GM12878 (cell line): ENCODE measurements at regions of chr10 and their contacts with region 1.

Region 1: DNA sequence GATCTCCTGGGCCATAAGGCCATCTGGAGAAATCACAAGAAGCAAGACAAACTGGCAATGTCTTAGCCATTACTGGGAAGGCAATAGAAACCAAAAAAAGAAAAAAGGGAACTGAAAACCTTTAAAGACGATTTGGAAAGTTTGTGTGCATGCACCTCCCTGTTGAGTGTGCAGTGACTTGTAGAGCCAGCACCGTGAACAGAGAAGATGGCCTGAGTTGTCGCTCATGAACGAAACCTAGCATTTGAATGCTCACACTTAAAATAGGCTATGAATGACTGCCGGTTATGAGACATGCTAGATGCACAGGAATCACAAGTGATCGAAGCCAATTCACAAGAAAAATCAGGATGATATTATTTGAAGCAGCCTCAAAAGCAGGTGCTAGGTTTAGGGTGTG is 151.3 kb upstream of the ADO start:
- DNase-seq: peak; percentile 97
- ATAC-seq: peak; percentile 85
- H3K4me3 ChIP-seq: no peak overlapping the region
- H3K27ac ChIP-seq: peak overlapping the region; percentile 90
- H3K4me1 ChIP-seq: peaks cover 50% of the 10 kb centered on the region
- H3K27me3 ChIP-seq: no peaks in the 10 kb centered on the region
- CTCF ChIP-seq: no peak
- EP300 ChIP-seq: peak; percentile 99
- POLR2A ChIP-seq: no peak
- RAD21 ChIP-seq: peak; percentile 45; the same call in 1 of the 2 replicates

Region 2: GRCh38 chr10:62618576-62619412 is 34.5 kb before region 1 on chr10:
- CTCF ChIA-PET with region 1: no interaction called
- POLR2A ChIA-PET with region 1: interaction called, 3 read pairs
- RAD21 ChIA-PET with region 1: interaction called, 39 read pairs
- SMC1A ChIA-PET with region 1: interaction called, 30 read pairs
- in situ Hi-C with region 1: no loop called
- intact Hi-C with region 1: loop called (anchors 1 kb)
- DNase-seq: no peak
- ATAC-seq: peak; percentile 58
- H3K4me3 ChIP-seq: no peak overlapping the region
- H3K27ac ChIP-seq: 0 out of 2 replicates have a peak overlapping the region, but pooled peaks have one; percentile 2
- H3K4me1 ChIP-seq: peaks cover 30% of the 10 kb centered on the region
- H3K27me3 ChIP-seq: no peaks in the 10 kb centered on the region
- CTCF ChIP-seq: no peak
- EP300 ChIP-seq: no peak
- POLR2A ChIP-seq: no peak
- RAD21 ChIP-seq: no peak

Region 3: GRCh38 chr10:62637249-62638061 is 15.8 kb before region 1 on chr10:
- CTCF ChIA-PET with region 1: interaction called, 64 read pairs
- POLR2A ChIA-PET with region 1: interaction called, 59 read pairs
- RAD21 ChIA-PET with region 1: interaction called, 97 read pairs
- SMC1A ChIA-PET with region 1: interaction called, 329 read pairs
- in situ Hi-C with region 1: no loop called
- intact Hi-C with region 1: loop called (anchors 1 kb)
- DNase-seq: peak; percentile 81
- ATAC-seq: peak; percentile 79
- H3K4me3 ChIP-seq: peak overlapping the region; percentile 12
- H3K27ac ChIP-seq: peak overlapping the region; percentile 95
- H3K4me1 ChIP-seq: peaks cover 85% of the 10 kb centered on the region
- H3K27me3 ChIP-seq: no peaks in the 10 kb centered on the region
- CTCF ChIP-seq: no peak
- EP300 ChIP-seq: peak; percentile 23 to 60; a peak in 3 of 4 replicates
- POLR2A ChIP-seq: peak; percentile 61
- RAD21 ChIP-seq: no peak

Region 4: DNA sequence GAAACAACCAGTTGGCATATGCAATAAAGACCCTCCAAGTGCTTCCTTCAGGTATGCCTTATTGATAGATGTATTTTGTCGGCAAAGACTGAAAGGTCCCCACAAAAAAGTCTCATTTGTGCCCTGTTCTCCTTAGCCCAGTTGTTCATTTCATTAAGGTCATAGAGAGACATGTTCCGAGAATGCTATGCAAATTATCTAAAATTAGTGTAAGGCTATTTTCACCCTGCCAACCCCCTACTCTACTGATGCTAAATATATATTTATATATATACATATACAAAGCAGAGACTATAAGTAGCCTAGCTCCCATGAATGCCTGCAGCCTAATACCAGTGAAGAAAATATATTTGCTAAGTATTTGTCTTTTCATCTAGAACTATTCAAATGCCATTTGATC is 54.6 kb after region 1 on chr10:
- CTCF ChIA-PET with region 1: interaction called, 3 read pairs
- POLR2A ChIA-PET with region 1: interaction called, 3 read pairs
- RAD21 ChIA-PET with region 1: interaction called, 26 read pairs
- SMC1A ChIA-PET with region 1: interaction called, 15 read pairs
- in situ Hi-C with region 1: no loop called
- intact Hi-C with region 1: loop called (anchors 2 kb)
- DNase-seq: peak; percentile 40
- ATAC-seq: peak; percentile 76
- H3K4me3 ChIP-seq: peak overlapping the region; percentile 9; the same call in 1 of the 2 replicates
- H3K27ac ChIP-seq: peak overlapping the region; percentile 61; the same call in 1 of the 2 replicates
- H3K4me1 ChIP-seq: peaks cover 30% of the 10 kb centered on the region
- H3K27me3 ChIP-seq: no peaks in the 10 kb centered on the region
- CTCF ChIP-seq: no peak
- EP300 ChIP-seq: peak; percentile 9 to 76; a peak in 2 of 4 replicates
- POLR2A ChIP-seq: no peak
- RAD21 ChIP-seq: 0 out of 2 replicates have a peak, but pooled peaks have one; percentile 20

Region 5: GRCh38 chr10:62804356-62805230 is 151.3 kb after region 1 on chr10 and contains the start of gene ADO:
- CTCF ChIA-PET with region 1: interaction called, 5 read pairs
- POLR2A ChIA-PET with region 1: interaction called, 5 read pairs
- RAD21 ChIA-PET with region 1: interaction called, 12 read pairs
- SMC1A ChIA-PET with region 1: interaction called, 11 read pairs
- in situ Hi-C with region 1: no loop called
- intact Hi-C with region 1: no loop called
- DNase-seq: peak; percentile 59
- ATAC-seq: peak; percentile 83
- H3K4me3 ChIP-seq: peak within 1 kb of the TSS; percentile 88
- H3K27ac ChIP-seq: peak within 1 kb of the TSS; percentile 98
- H3K4me1 ChIP-seq: peaks cover 4% of the 10 kb centered on the region; the same call in 1 of the 2 replicates
- H3K27me3 ChIP-seq: no peaks in the 10 kb centered on the region
- CTCF ChIP-seq: no peak
- EP300 ChIP-seq: peak in 1 of 2 experiments; percentile 26; a peak in 1 of 4 replicates
- POLR2A ChIP-seq: peak; percentile 89
- RAD21 ChIP-seq: 0 out of 2 replicates have a peak, but pooled peaks have one; percentile 6
- polyA plus RNA-seq, gene ADO: 4.3 to 8.5 TPM